Endothelial cell of umbilical vein (primary cell): ENCODE measurements at regions of chr5 and their contacts with region 1.

Region 1: GRCh38 chr5:148730943-148731861 is 76.9 kb upstream of the HTR4 start:
- DNase-seq: peak; percentile 89
- H3K4me3 ChIP-seq: no peak overlapping the region
- H3K27ac ChIP-seq: no peak overlapping the region
- H3K4me1 ChIP-seq: peaks cover 23% of the 10 kb centered on the region
- H3K27me3 ChIP-seq: no peaks in the 10 kb centered on the region
- CTCF ChIP-seq: peak; percentile 78 to 82
- POLR2A ChIP-seq: no peak

Region 2: GRCh38 chr5:147887024-147887627 is 844.1 kb before region 1 on chr5:
- CTCF ChIA-PET with region 1: interaction called, 11 read pairs
- POLR2A ChIA-PET with region 1: no interaction called
- dilution Hi-C with region 1: no loop called
- intact Hi-C with region 1: no loop called
- DNase-seq: peak; percentile 67
- H3K4me3 ChIP-seq: no peak overlapping the region
- H3K27ac ChIP-seq: no peak overlapping the region
- H3K4me1 ChIP-seq: peaks cover 2% of the 10 kb centered on the region
- H3K27me3 ChIP-seq: no peaks in the 10 kb centered on the region
- CTCF ChIP-seq: peak; percentile 37 to 39
- POLR2A ChIP-seq: no peak

Region 3: GRCh38 chr5:148029131-148029530 is 702.1 kb before region 1 on chr5:
- CTCF ChIA-PET with region 1: no interaction called
- POLR2A ChIA-PET with region 1: no interaction called
- dilution Hi-C with region 1: no loop called
- intact Hi-C with region 1: no loop called
- DNase-seq: no peak
- H3K4me3 ChIP-seq: no peak overlapping the region
- H3K27ac ChIP-seq: no peak overlapping the region
- H3K4me1 ChIP-seq: no peaks in the 10 kb centered on the region
- H3K27me3 ChIP-seq: no peaks in the 10 kb centered on the region
- CTCF ChIP-seq: no peak
- POLR2A ChIP-seq: no peak

Region 4: DNA sequence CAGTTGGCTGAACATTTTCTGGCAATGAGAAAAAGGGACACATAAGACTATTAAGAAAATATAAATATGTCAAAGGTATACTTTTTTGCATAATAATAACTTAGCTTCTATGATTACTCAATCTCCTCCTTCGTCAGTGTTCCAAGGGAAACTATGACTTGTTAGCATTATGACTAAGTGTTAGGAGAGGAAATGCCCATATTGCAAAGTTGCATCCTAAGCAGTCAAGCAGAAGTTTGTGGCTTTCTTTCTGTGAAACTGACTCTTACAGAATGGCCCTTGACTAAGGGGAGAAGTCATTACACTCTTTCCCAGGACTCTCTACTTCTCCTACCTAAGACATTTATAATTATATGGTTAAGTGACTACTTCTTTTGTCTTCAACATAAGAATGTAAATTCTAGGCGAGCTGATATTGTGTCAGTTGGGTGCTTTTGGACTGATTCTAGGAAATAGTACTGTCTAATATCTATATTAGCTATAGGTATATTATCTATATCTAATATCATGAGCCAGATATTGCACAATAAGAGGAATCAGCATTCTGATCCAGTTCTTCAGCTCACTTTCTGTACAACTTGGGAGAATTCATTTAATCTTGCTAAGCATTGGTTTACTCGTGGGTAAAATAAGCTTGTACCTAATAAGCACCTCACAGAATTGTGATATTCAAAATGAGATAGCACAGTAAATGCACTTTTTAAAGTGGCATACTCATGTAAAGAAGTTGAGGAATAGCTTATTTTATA is 544.8 kb before region 1 on chr5:
- CTCF ChIA-PET with region 1: interaction called, 105 read pairs
- POLR2A ChIA-PET with region 1: no interaction called
- dilution Hi-C with region 1: no loop called
- intact Hi-C with region 1: no loop called
- DNase-seq: peak; percentile 84
- H3K4me3 ChIP-seq: no peak overlapping the region
- H3K27ac ChIP-seq: peak overlapping the region; percentile 18
- H3K4me1 ChIP-seq: peaks cover 22% of the 10 kb centered on the region
- H3K27me3 ChIP-seq: no peaks in the 10 kb centered on the region
- CTCF ChIP-seq: no peak
- POLR2A ChIP-seq: no peak

Region 5: GRCh38 chr5:148457183-148457620 is 274.0 kb before region 1 on chr5:
- CTCF ChIA-PET with region 1: interaction called, 15 read pairs
- POLR2A ChIA-PET with region 1: no interaction called
- dilution Hi-C with region 1: no loop called
- intact Hi-C with region 1: no loop called
- DNase-seq: peak; percentile 34
- H3K4me3 ChIP-seq: no peak overlapping the region
- H3K27ac ChIP-seq: no peak overlapping the region
- H3K4me1 ChIP-seq: no peaks in the 10 kb centered on the region
- H3K27me3 ChIP-seq: no peaks in the 10 kb centered on the region
- CTCF ChIP-seq: peak; percentile 21 to 39
- POLR2A ChIP-seq: no peak

Region 6: GRCh38 chr5:148708854-148709253 is 22.3 kb before region 1 on chr5:
- CTCF ChIA-PET with region 1: interaction called, 23 read pairs
- POLR2A ChIA-PET with region 1: no interaction called
- dilution Hi-C with region 1: no loop called
- intact Hi-C with region 1: no loop called
- DNase-seq: no peak
- H3K4me3 ChIP-seq: no peak overlapping the region
- H3K27ac ChIP-seq: no peak overlapping the region
- H3K4me1 ChIP-seq: no peaks in the 10 kb centered on the region
- H3K27me3 ChIP-seq: no peaks in the 10 kb centered on the region
- CTCF ChIP-seq: no peak
- POLR2A ChIP-seq: no peak

Region 7: DNA sequence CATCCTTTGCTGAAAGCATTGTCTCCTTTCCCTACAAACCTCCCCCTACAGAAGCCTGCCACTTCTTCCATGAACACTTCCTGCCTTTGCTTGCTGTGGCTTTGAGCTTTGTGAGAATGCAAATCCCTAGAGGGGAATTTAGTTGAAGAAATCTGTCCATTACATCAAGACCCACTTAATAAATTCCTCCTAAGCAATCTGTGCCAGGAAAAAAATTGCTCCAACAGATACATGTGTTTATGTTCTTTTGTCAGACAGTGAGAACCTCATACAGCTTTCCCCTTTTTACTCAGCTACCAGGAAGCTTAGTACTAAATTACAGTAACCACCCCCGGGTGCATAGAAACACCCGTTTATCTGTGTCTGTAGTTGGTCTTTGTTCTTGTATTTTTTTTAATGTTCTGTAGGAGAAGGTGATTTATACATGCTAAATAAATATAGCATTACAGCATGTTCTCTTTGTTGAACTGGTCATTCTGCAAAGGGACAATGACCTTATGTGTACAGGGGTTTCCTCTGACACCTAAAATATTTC is 287.8 kb after region 1 on chr5:
- CTCF ChIA-PET with region 1: interaction called, 11 read pairs
- POLR2A ChIA-PET with region 1: no interaction called
- dilution Hi-C with region 1: no loop called
- intact Hi-C with region 1: no loop called
- DNase-seq: no peak
- H3K4me3 ChIP-seq: no peak overlapping the region
- H3K27ac ChIP-seq: no peak overlapping the region
- H3K4me1 ChIP-seq: peaks cover 9% of the 10 kb centered on the region
- H3K27me3 ChIP-seq: no peaks in the 10 kb centered on the region
- CTCF ChIP-seq: no peak
- POLR2A ChIP-seq: no peak

Region 8: GRCh38 chr5:149268928-149269557 is 537.8 kb after region 1 on chr5:
- CTCF ChIA-PET with region 1: interaction called, 4 read pairs
- POLR2A ChIA-PET with region 1: no interaction called
- dilution Hi-C with region 1: no loop called
- intact Hi-C with region 1: loop called (anchors 2 kb)
- DNase-seq: peak; percentile 47
- H3K4me3 ChIP-seq: no peak overlapping the region
- H3K27ac ChIP-seq: no peak overlapping the region
- H3K4me1 ChIP-seq: peaks cover 14% of the 10 kb centered on the region
- H3K27me3 ChIP-seq: peaks cover 0 to 1% of the 10 kb centered on the region in 2 experiments
- CTCF ChIP-seq: peak; percentile 49 to 57
- POLR2A ChIP-seq: no peak